ENCODE measurements at regions of chr6 and their contacts with region 1.

Region 1: GRCh38 chr6:126020305-126021050 is 34.1 kb downstream of the TRMT11 start:
- DNase-seq: no peak
- ATAC-seq: no peak
- H3K4me3 ChIP-seq: no peak overlapping the region
- H3K4me1 ChIP-seq: no peaks in the 10 kb centered on the region
- CTCF ChIP-seq: no peak

Region 2: GRCh38 chr6:125812394-125813292 is 207.8 kb before region 1 on chr6:
- intact Hi-C with region 1: no loop called
- DNase-seq: no peak
- ATAC-seq: no peak
- H3K4me3 ChIP-seq: no peak overlapping the region
- H3K4me1 ChIP-seq: no peaks in the 10 kb centered on the region
- CTCF ChIP-seq: no peak

Region 3: GRCh38 chr6:126153661-126154060 is 133.2 kb after region 1 on chr6:
- intact Hi-C with region 1: no loop called
- DNase-seq: no peak
- ATAC-seq: no peak
- H3K4me3 ChIP-seq: no peak overlapping the region
- H3K4me1 ChIP-seq: no peaks in the 10 kb centered on the region
- CTCF ChIP-seq: no peak

Region 4: DNA sequence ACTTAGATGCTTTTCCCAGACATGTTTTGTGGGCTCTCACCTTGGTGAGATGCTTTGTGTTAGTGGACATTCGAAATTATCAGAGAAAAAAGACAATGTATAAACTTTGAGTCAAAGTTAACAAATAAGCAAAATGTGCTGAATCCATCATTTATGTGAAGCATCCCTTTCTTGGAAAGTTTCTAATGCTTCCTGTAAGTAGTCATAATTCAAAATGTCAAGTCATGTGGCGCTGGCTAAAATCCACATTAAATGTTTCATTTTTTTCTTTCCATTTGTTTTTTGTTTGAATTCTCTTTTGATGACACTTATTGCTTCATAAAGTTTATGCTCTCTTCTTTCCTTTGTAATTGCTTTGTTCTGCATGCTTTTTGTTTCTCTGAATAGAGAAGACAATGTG is 212.2 kb after region 1 on chr6:
- intact Hi-C with region 1: no loop called
- DNase-seq: no peak
- ATAC-seq: no peak
- H3K4me3 ChIP-seq: no peak overlapping the region
- H3K4me1 ChIP-seq: no peaks in the 10 kb centered on the region
- CTCF ChIP-seq: no peak

Region 5: DNA sequence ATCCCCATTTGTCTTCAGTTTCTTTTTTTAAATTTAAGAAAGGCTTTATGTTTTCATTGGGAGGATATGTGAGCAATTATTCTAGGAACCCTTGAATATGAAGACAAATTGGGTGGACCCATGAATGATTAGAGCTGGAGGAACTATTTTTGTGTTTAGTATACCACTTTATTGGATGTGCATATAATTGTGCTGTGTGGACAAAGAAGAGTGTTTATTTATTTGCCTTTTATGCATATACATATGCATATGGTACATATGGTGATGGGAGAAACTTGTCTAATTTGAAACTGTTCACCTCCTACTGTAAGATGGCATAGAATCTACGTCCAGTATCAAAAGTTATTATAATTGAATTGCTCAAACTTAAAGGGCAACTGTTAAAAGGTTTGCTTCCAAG is 224.6 kb after region 1 on chr6:
- intact Hi-C with region 1: loop called in 1 of 2 experiments (anchors 5 kb)
- DNase-seq: no peak
- ATAC-seq: no peak
- H3K4me3 ChIP-seq: no peak overlapping the region
- H3K4me1 ChIP-seq: no peaks in the 10 kb centered on the region
- CTCF ChIP-seq: no peak

Measured in mucosa of descending colon (tissue), 3 donors.